ENCODE measurements at regions of chr10 and their contacts with region 1.

Region 1: GRCh38 chr10:11810313-11810766 is 12.8 kb upstream of the PROSER2 start:
- DNase-seq: peak; percentile 52
- ATAC-seq: peak; percentile 85
- H3K4me3 ChIP-seq: no peak overlapping the region
- H3K27ac ChIP-seq: peak overlapping the region; percentile 9; the same call in 1 of the 2 replicates
- H3K4me1 ChIP-seq: peaks cover 4% of the 10 kb centered on the region; the same call in 1 of the 2 replicates
- H3K27me3 ChIP-seq: peaks cover 3% of the 10 kb centered on the region; the same call in 1 of the 2 replicates
- CTCF ChIP-seq: no peak
- POLR2A ChIP-seq: no peak
- RAD21 ChIP-seq: no peak

Region 2: GRCh38 chr10:11373619-11374235 is 436.6 kb before region 1 on chr10:
- CTCF ChIA-PET with region 1: no interaction called
- POLR2A ChIA-PET with region 1: no interaction called
- dilution Hi-C with region 1: no loop called
- in situ Hi-C with region 1: no loop called
- intact Hi-C with region 1: no loop called
- DNase-seq: no peak
- ATAC-seq: no peak
- H3K4me3 ChIP-seq: no peak overlapping the region
- H3K27ac ChIP-seq: no peak overlapping the region
- H3K4me1 ChIP-seq: no peaks in the 10 kb centered on the region
- H3K27me3 ChIP-seq: no peaks in the 10 kb centered on the region
- CTCF ChIP-seq: no peak
- POLR2A ChIP-seq: no peak
- RAD21 ChIP-seq: no peak

Region 3: GRCh38 chr10:11698691-11699549 is 111.4 kb before region 1 on chr10:
- CTCF ChIA-PET with region 1: no interaction called
- POLR2A ChIA-PET with region 1: no interaction called
- dilution Hi-C with region 1: no loop called
- in situ Hi-C with region 1: no loop called
- intact Hi-C with region 1: no loop called
- DNase-seq: no peak
- ATAC-seq: peak; percentile 40
- H3K4me3 ChIP-seq: no peak overlapping the region
- H3K27ac ChIP-seq: no peak overlapping the region
- H3K4me1 ChIP-seq: no peaks in the 10 kb centered on the region
- H3K27me3 ChIP-seq: no peaks in the 10 kb centered on the region; the same call in 1 of the 2 replicates
- CTCF ChIP-seq: no peak
- POLR2A ChIP-seq: no peak
- RAD21 ChIP-seq: no peak

Region 4: GRCh38 chr10:11823122-11823988 is 13.0 kb after region 1 on chr10 and contains the start of gene PROSER2:
- CTCF ChIA-PET with region 1: interaction called, 10 read pairs
- POLR2A ChIA-PET with region 1: interaction called, 6 read pairs
- dilution Hi-C with region 1: no loop called
- in situ Hi-C with region 1: no loop called
- intact Hi-C with region 1: no loop called
- DNase-seq: peak; percentile 52
- ATAC-seq: peak; percentile 92
- H3K4me3 ChIP-seq: peak within 1 kb of the TSS; percentile 97
- H3K27ac ChIP-seq: no peak within 1 kb of the TSS; the same call in 1 of the 2 replicates
- H3K4me1 ChIP-seq: peaks cover 1% of the 10 kb centered on the region; the same call in 1 of the 2 replicates
- H3K27me3 ChIP-seq: no peaks in the 10 kb centered on the region
- CTCF ChIP-seq: no peak
- POLR2A ChIP-seq: no peak; the same call in 1 of the 2 replicates
- RAD21 ChIP-seq: no peak
- total RNA-seq, gene PROSER2: 1.4 TPM in 2 replicates